ENCODE measurements at regions of chr1 and their contacts with region 1.

Region 1: GRCh38 chr1:44251989-44252671 is 38.9 kb downstream of the DMAP1 start:
- DNase-seq: no peak
- ATAC-seq: no peak
- H3K4me3 ChIP-seq: no peak overlapping the region
- H3K27ac ChIP-seq: no peak overlapping the region
- H3K4me1 ChIP-seq: peaks cover 0 to 28% (median 11%) of the 10 kb centered on the region in 12 donors
- H3K27me3 ChIP-seq: no peaks in the 10 kb centered on the region
- CTCF ChIP-seq: no peak
- POLR2A ChIP-seq: no peak

Region 2: DNA sequence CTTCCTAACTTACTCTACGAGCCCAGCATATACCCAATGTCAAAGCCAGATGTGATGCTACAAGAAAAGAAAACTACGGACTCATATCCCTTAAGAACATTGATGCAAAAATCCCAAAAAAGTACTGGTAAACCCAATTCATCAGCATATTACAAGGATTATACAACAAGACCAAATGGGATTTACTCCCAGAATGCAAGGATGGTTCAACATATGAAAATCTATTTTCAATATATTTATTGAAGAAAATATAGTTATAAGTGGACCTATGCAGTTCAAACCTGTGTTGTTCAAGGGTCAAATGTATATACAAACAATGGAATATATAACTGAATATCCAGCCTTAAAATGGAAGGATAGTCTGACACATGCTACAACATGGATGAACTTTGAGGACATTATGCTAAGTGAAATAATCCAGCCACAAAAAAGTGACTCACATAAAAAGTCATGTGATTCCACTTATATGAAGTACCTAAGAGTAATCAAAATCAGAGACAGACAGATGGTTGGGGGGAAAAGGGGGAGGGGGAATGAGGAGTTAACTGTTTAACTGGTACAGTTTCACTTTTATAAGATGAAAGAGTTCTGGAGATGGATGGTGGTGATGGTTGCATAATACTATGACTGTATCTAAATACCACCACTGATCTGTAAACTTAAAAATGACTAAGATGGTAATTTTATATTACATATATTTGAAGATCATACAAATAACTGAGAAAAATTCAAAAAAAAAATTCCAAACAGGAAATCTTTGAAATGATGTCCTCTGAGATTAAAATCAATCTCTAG is 107.0 kb before region 1 on chr1:
- intact Hi-C with region 1: no loop called
- DNase-seq: no peak
- ATAC-seq: no peak
- H3K4me3 ChIP-seq: no peak overlapping the region
- H3K27ac ChIP-seq: no peak overlapping the region
- H3K4me1 ChIP-seq: no peaks in the 10 kb centered on the region
- H3K27me3 ChIP-seq: peaks cover 0 to 5% (median 3%) of the 10 kb centered on the region in 9 donors
- CTCF ChIP-seq: no peak
- POLR2A ChIP-seq: no peak

Region 3: DNA sequence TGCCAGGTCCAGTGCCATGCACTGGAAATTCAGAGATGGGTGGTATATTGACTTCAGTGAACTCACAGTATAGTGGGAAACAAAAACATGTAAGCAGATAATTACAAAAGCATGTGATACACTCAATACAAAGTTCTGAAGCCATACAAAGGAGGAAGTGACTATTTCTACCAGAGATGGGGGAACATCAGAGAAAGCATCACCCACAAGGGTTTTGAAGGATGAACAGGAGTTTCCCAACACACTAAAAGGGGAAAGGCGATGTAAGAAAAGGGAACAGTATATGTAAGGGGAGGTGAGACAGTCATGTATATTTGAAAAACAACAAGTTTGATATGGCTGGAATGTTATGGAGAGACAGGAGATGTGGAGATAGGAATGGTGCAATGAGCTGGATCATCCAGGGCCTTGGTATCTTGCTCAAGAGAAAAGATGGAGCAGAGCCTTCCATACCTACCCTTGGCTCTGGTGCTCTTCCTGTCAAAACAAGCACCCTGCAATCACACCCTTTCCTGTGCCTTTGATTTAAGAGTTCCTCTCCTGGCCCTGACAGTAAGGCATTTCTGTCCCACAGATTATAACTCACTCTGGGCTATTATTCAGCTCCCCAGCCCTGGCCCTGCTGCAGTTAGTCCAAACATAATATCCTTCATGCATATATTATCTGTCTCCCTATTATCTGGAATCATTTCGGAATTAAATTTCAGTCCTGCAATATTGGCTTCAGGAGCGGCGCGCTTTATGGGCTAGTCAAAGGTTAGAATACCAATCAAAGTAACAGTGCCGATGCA is 21.6 kb after region 1 on chr1:
- intact Hi-C with region 1: loop called in 1 of 10 experiments (anchors 2 kb)
- DNase-seq: no peak
- ATAC-seq: no peak
- H3K4me3 ChIP-seq: no peak overlapping the region
- H3K27ac ChIP-seq: no peak overlapping the region
- H3K4me1 ChIP-seq: peaks cover 0 to 28% (median 15%) of the 10 kb centered on the region in 12 donors
- H3K27me3 ChIP-seq: no peaks in the 10 kb centered on the region
- CTCF ChIP-seq: no peak
- POLR2A ChIP-seq: no peak

Region 4: GRCh38 chr1:44318097-44319088 is 66.3 kb after region 1 on chr1:
- intact Hi-C with region 1: no loop called
- DNase-seq: peak in 2 of 5 donors; percentile 22 to 28
- ATAC-seq: peak in 1 of 4 donors; percentile 26
- H3K4me3 ChIP-seq: no peak overlapping the region
- H3K27ac ChIP-seq: no peak overlapping the region
- H3K4me1 ChIP-seq: peaks cover 0 to 6% (median 0%) of the 10 kb centered on the region in 12 donors
- H3K27me3 ChIP-seq: no peaks in the 10 kb centered on the region
- CTCF ChIP-seq: peak; percentile 62 to 87 (median 76)
- POLR2A ChIP-seq: no peak